Vagina (tissue), 2 donors: ENCODE measurements at regions of chr2 and their contacts with region 1.

Region 1: GRCh38 chr2:10647886-10648605 is 41.7 kb downstream of the NOL10 start:
- DNase-seq: no peak
- H3K4me3 ChIP-seq: no peak overlapping the region
- H3K27ac ChIP-seq: no peak overlapping the region
- H3K4me1 ChIP-seq: no peaks in the 10 kb centered on the region
- H3K27me3 ChIP-seq: no peaks in the 10 kb centered on the region
- CTCF ChIP-seq: no peak
- POLR2A ChIP-seq: no peak

Region 2: DNA sequence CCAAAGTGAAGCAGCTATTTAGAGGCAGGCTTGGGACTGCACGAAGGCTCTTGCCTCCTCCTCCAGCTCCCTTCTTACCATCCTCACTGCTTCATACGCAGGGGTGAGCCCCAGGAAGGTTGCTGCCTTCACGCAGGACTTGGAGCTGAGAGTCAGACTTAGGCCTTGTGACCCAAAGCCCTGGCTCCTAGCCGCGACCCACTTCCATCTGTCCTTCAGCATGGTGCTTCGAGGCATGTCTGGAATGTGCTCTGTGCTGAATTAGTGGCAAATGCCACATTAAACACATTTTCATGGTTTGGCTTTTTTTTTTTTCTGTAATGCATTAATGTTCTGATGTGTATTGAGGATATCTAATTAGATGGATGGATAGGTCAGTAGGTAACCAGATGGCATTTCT is 1262.2 kb before region 1 on chr2:
- intact Hi-C with region 1: loop called (anchors 5 kb)
- DNase-seq: no peak
- H3K4me3 ChIP-seq: no peak overlapping the region
- H3K27ac ChIP-seq: peak overlapping the region; percentile 71
- H3K4me1 ChIP-seq: peaks cover 21% of the 10 kb centered on the region
- H3K27me3 ChIP-seq: no peaks in the 10 kb centered on the region
- CTCF ChIP-seq: no peak
- POLR2A ChIP-seq: no peak

Region 3: DNA sequence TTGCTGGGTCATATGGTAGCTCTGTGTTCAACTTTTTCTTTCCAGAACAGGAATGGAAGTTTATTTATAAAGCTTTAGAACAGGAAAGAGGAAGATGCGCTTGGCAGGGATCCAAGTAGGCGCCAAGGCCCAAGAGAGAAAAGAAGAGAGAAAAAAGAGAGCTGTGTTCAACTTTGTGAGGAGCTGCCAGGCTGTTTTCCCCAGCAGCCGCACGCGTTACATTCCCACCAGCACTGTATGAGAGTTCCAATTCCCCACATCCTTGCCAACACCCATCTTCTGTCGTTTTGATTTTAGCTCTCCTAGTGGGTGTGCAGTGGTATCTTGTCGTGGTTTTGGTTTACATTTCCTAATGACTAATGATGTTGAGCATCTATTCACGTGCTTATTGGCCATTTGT is 315.1 kb after region 1 on chr2:
- intact Hi-C with region 1: no loop called
- DNase-seq: no peak
- H3K4me3 ChIP-seq: no peak overlapping the region
- H3K27ac ChIP-seq: no peak overlapping the region
- H3K4me1 ChIP-seq: no peaks in the 10 kb centered on the region
- H3K27me3 ChIP-seq: no peaks in the 10 kb centered on the region
- CTCF ChIP-seq: no peak
- POLR2A ChIP-seq: no peak